ENCODE measurements at regions of chr20 and their contacts with region 1.

Region 1: DNA sequence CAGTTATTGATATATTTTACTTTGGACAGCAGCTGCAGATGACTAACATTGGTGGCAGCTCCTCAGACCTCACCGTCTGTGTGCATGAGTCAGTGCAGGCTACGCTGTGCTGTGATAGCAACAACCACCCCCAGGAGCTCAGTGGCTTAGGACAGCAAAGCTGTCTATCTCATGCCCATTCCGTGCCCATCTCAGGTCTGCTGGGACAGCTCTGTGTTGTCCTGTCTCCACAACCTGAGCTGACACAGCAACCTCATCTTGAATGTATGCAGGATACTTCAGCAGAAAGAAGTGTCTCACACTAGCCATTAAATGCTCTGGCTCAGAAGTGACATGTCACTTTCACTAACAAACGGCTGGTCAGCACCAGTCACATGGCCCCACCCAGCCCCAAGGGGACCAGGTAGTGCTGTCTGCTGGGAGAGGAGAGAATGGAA is 47.7 kb downstream of the BANF2 start:
- DNase-seq: no peak
- ATAC-seq: no peak
- H3K4me3 ChIP-seq: no peak overlapping the region
- H3K4me3 Mint-ChIP-seq: no peak overlapping the region
- H3K27ac ChIP-seq: no peak overlapping the region
- H3K27ac Mint-ChIP-seq: no peak overlapping the region
- H3K4me1 ChIP-seq: no peaks in the 10 kb centered on the region
- H3K4me1 Mint-ChIP-seq: no peaks in the 10 kb centered on the region
- H3K27me3 ChIP-seq: peaks cover 0 to 2% of the 10 kb centered on the region in 2 experiments
- H3K27me3 Mint-ChIP-seq: peaks cover 3 to 7% of the 10 kb centered on the region in 2 donors

Region 2: DNA sequence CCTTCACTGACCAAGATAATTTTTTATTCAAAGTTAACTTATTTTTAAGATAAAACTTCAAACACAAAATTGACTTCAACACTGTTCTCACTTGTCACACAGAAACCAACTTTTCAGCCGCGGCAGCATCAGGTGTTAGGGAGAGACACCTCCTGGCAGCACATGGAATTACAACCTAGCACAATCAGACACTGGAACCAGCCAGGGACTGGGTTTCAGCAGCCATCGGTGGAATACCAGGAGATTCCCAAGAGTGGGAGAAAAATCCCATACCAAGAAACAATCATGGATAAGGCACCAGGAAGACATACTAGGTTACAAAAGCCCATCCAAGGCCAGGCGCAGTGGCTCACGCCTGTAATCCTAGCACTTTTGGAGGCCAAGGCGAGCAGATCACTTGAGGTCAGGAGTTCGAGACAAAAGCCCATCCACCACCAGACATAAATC is 151.1 kb after region 1 on chr20:
- CTCF ChIA-PET with region 1: no interaction called
- POLR2A ChIA-PET with region 1: interaction called in 1 of 2 experiments, 15 read pairs
- DNase-seq: peak in 34 of 35 experiments; percentile 24 to 80 (median 54)
- ATAC-seq: peak; percentile 53 to 77 (median 62)
- H3K4me3 ChIP-seq: no peak overlapping the region
- H3K4me3 Mint-ChIP-seq: no peak overlapping the region
- H3K27ac ChIP-seq: no peak overlapping the region
- H3K27ac Mint-ChIP-seq: no peak overlapping the region
- H3K4me1 ChIP-seq: peaks cover 3 to 4% of the 10 kb centered on the region in 2 experiments
- H3K4me1 Mint-ChIP-seq: peaks cover 10 to 16% (median 11%) of the 10 kb centered on the region in 3 donors
- H3K27me3 ChIP-seq: peaks cover 0 to 20% of the 10 kb centered on the region in 2 experiments
- H3K27me3 Mint-ChIP-seq: peaks cover 28 to 30% of the 10 kb centered on the region in 2 donors

Measured in T-cell (primary cell).